ENCODE measurements at regions of chr11 and their contacts with region 1.

Region 1: DNA sequence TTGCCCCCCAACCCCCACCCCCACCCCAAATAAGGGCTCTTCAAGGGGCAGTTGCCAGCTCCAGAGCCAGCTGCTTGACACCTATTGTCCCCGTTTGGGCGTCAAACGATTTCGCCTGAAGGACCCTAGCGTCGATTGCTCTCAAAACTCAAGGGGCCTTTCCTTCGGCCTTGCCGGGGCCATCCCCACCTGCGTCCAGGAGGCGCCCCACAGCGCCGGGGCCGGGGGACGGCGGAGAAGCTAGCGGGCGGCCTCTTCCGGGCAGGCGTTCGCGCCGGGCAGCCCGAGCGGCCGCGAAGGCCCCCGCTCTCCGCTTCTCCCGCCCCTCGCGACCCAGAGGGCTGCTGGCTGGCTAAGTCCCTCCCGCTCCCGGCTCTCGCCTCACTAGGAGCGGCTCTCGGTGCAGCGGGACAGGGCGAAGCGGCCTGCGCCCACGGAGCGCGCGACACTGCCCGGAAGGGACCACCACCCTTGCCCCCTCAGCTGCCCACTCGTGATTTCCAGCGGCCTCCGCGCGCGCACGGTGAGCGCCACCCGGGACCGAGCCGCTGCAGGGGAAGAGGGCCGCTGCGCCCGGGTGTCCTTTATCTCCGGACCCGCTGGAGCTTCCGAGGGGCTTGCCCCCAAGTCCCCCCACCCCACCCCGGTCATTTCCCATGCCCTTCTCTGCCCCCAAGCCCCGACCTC is at the start of gene CAPRIN1:
- DNase-seq: peak; percentile 92
- H3K4me3 ChIP-seq: peak within 1 kb of the TSS; percentile 84 to 98 (median 93)
- H3K27ac ChIP-seq: peak within 1 kb of the TSS; percentile 98 to 99 (median 98)
- H3K4me1 ChIP-seq: peaks cover 0 to 38% (median 30%) of the 10 kb centered on the region in 4 donors
- H3K27me3 ChIP-seq: no peaks in the 10 kb centered on the region
- CTCF ChIP-seq: no peak
- EP300 ChIP-seq: no peak
- POLR2A ChIP-seq: peak; percentile 54 to 72
- total RNA-seq, gene CAPRIN1: 107 to 118 (median 113) TPM

Region 2: GRCh38 chr11:33039274-33040032 is 1012.0 kb before region 1 on chr11 and contains the start of gene TCP11L1:
- intact Hi-C with region 1: loop called (anchors 5 kb)
- DNase-seq: peak; percentile 96
- H3K4me3 ChIP-seq: peak within 1 kb of the TSS; percentile 72 to 98 (median 79)
- H3K27ac ChIP-seq: peak within 1 kb of the TSS; percentile 97 to 100 (median 98)
- H3K4me1 ChIP-seq: peaks cover 0 to 24% (median 21%) of the 10 kb centered on the region in 4 donors
- H3K27me3 ChIP-seq: no peaks in the 10 kb centered on the region
- CTCF ChIP-seq: no peak
- EP300 ChIP-seq: no peak
- POLR2A ChIP-seq: peak; percentile 28 to 45
- total RNA-seq, gene TCP11L1: 38.7 to 70.3 (median 42.7) TPM

Region 3: GRCh38 chr11:33257897-33258630 is 793.4 kb before region 1 on chr11:
- intact Hi-C with region 1: loop called (anchors 2 kb)
- DNase-seq: peak; percentile 96
- H3K4me3 ChIP-seq: peak overlapping the region; percentile 66 to 97 (median 85)
- H3K27ac ChIP-seq: peak overlapping the region; percentile 99 to 100 (median 100)
- H3K4me1 ChIP-seq: peaks cover 0 to 42% (median 38%) of the 10 kb centered on the region in 4 donors
- H3K27me3 ChIP-seq: no peaks in the 10 kb centered on the region
- CTCF ChIP-seq: peak; percentile 28 to 57 (median 44)
- EP300 ChIP-seq: peak in 1 of 4 donors; percentile 56
- POLR2A ChIP-seq: peak; percentile 31 to 58

Region 4: DNA sequence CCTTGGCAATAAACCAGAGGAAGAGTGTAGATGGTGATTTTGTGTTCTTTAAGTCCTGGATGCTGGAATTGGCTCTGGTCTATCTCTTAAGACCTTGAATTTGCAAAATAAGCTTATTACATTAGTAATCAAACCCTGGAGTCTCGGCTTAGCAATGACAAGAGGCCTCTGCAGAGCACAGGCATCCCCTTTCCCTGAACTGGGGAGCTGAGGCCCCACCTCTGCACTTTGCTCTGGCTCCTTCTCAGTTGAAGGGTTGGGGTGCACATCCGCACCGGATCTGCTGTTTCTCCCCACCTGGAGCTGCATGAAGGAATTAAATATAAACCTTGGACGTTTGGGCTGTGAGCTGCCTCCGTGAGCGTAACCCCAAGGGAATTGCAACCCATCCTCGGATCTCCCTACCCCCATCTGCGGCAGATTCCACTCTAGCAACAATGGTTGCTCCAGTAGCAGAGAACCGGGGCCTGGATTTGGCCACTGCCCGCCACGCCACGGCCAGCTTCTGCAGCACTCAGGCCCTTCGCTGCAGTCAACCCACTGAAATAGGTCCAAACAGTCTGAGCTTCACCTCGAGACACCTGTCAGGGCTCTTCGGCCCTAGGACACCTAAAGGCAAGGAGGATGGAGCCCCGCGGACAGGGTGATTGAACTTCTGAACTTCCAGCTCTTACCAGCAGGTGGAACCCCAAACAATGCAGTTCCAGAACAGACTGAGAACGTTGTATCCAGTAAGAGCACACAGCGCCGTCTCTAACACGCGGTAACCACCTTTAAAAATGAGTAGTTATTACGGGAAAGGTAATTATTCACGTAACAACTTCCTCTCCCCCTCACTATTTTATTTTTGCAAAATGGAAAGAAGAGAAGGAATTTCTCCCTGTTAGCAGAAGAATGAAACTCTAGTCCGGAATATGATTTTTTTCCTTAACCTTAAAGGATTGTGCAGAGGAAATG is 54.7 kb before region 1 on chr11:
- intact Hi-C with region 1: loop called (anchors 2 kb)
- DNase-seq: peak; percentile 74
- H3K4me3 ChIP-seq: no peak overlapping the region
- H3K27ac ChIP-seq: no peak overlapping the region
- H3K4me1 ChIP-seq: peaks cover 0 to 12% (median 4%) of the 10 kb centered on the region in 4 donors
- H3K27me3 ChIP-seq: no peaks in the 10 kb centered on the region
- CTCF ChIP-seq: peak; percentile 55 to 84 (median 80)
- EP300 ChIP-seq: no peak
- POLR2A ChIP-seq: no peak

Region 5: GRCh38 chr11:34357701-34358257 is 306.3 kb after region 1 on chr11 and contains the start of gene ABTB2:
- intact Hi-C with region 1: loop called (anchors 2 kb)
- DNase-seq: peak; percentile 99
- H3K4me3 ChIP-seq: peak within 1 kb of the TSS; percentile 40 to 64 (median 54)
- H3K27ac ChIP-seq: peak within 1 kb of the TSS; percentile 83 to 88 (median 85)
- H3K4me1 ChIP-seq: peaks cover 0 to 33% (median 27%) of the 10 kb centered on the region in 4 donors
- H3K27me3 ChIP-seq: no peaks in the 10 kb centered on the region
- CTCF ChIP-seq: no peak
- EP300 ChIP-seq: no peak
- POLR2A ChIP-seq: peak; percentile 83 to 92
- total RNA-seq, gene ABTB2: 1.3 to 2.5 (median 2.1) TPM

Region 6: GRCh38 chr11:34916015-34916842 is 864.7 kb after region 1 on chr11 and contains the starts of genes APIP and PDHX:
- intact Hi-C with region 1: loop called (anchors 5 kb)
- DNase-seq: peak; percentile 99
- H3K4me3 ChIP-seq: peak within 1 kb of the TSS; percentile 80 to 93 (median 88)
- H3K27ac ChIP-seq: peak within 1 kb of the TSS; percentile 95 to 98 (median 96)
- H3K4me1 ChIP-seq: peaks cover 0 to 35% (median 28%) of the 10 kb centered on the region in 4 donors
- H3K27me3 ChIP-seq: no peaks in the 10 kb centered on the region
- CTCF ChIP-seq: no peak
- EP300 ChIP-seq: no peak
- POLR2A ChIP-seq: peak; percentile 94 to 96
- total RNA-seq, gene APIP: 33.0 to 43.9 (median 41.5) TPM
- total RNA-seq, gene PDHX: 27.7 to 32.8 (median 31.0) TPM